Head of caudate nucleus (tissue), 42 donors: ENCODE measurements at regions of chr11 and their contacts with region 1.

Region 1: DNA sequence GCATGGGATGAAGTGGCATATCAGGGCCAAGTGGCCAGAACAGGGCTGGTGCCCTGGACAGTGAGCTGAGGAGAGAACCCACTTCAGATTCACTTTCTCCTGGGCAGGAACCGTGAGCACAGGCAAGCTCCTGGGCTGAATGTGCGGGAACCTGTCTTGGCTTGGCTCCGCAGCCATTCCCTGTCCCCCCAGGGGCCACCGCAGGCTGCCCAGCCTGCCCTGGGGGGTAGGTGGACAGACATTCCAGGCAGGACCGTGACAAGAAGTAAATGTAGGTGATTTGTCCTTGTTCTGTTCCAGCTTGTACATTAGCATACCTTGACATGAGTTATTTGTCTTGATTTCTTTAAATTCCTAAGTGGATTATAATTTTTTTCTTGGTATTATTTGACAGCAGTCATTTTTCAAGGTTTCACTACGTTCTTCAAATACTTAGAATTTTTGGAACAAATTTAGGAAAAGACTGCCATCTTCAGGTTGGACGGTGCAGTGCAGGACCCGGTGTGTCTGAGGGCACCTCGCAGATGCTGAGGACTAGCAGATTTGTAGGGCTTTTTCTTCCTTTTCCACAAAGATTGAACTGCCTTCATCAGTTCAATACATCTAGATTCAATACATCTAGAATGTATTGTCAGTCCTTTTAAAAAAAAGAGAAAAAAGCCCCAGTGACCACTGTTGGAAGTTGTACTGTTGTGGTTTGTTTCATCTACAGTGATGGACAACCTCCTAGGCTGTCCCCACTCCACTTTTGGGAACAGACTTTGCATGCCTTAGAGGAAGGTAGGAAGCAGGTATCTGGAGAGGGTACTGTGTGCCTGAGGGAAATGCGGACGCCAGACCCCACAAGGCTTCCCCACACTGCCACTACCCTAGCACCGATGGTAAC is 115.1 kb upstream of the RASSF10 start:
- DNase-seq: peak in 41 of 42 donors; percentile 47 to 89 (median 77)

Region 2: GRCh38 chr11:12052676-12053605 is 841.1 kb before region 1 on chr11:
- intact Hi-C with region 1: loop called (anchors 10 kb)
- DNase-seq: no peak

Region 3: DNA sequence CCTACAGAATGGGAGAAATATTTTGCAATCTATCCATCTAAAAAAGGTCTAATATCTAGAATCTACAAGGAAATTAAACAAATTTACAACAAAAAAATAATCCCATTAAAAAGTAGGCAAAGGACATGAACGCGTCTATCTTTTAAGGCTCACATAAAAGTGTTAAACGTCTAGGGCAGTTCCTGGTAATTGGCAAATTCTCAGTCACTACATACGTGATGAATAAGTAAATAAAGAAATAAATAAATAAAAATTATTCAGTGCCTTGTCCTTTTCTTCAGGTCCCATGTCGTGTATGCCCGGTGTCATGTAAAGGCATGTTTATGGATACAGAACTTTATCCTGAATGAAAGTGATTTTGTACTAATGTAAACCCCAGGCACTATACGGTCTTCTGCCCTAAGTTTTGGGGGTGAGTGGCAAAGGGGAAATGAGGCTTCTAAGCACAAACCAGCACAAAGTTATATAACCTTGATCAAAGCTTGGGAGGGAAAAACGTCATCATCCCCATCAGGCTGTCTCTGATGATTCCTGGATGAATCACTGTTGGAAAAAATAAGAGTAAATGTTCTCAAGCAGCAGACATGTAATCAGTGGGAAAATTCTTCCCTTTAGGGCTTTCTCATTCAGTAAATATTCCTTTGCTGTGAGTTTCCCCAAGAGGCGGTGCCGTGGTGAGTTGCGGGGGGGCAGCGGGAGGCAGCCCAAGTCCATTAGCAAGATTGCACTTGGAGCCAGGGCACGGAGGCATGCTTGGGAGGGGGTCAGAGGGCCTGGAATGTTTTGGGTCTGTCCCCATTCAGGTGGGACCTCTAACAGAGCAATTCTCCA is 814.1 kb before region 1 on chr11:
- intact Hi-C with region 1: no loop called
- DNase-seq: peak in 13 of 42 donors; percentile 24 to 61 (median 34)

Region 4: DNA sequence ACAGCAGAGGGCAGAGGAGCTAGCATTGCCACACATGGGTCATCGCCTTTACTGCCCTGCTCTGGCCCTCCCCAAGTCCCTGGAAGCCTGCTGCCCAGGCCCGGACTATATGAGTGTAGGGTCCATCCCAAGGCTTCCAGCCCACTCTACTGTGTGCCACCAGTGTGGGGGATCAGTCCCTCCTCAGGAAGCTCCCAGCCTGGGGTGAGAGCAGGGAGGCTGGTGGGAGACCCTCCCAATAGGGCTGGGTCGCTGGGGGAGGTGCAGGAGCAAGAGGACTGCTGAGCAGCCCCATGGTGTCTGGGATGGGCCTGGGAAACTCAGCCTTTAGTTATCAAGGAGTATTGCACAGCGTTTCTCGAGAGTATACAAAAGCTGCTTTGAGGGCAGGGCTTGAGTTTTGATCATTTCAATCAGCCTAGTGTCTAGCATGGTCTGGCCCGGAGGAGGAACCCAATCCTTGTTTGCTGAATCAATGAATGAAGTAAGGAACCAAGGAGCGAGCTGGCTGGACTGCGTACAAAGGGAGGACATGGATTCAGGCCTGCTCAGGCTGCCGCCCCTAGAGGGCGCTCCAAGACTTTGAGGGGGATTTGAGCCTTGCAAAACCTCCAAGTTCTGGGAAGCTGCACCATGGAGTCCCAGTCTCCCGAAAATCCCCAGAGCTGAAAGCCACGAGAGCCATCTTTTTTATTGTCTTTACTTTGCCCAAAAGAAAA is 605.7 kb before region 1 on chr11:
- intact Hi-C with region 1: loop called (anchors 5 kb)
- DNase-seq: peak; percentile 71 to 94 (median 88)

Region 5: GRCh38 chr11:12331239-12331874 is 562.7 kb before region 1 on chr11:
- intact Hi-C with region 1: loop called (anchors 5 kb)
- DNase-seq: peak; percentile 68 to 95 (median 88)

Region 6: GRCh38 chr11:13009921-13010748 is 116.1 kb after region 1 on chr11:
- intact Hi-C with region 1: no loop called
- DNase-seq: peak in 15 of 42 donors; percentile 9 to 57 (median 22)